Mammary epithelial cell (primary cell): ENCODE measurements at regions of chr1 and their contacts with region 1.

Region 1: GRCh38 chr1:69858534-69858933 is 290.8 kb downstream of the LRRC7 start:
- DNase-seq: no peak
- H3K4me3 ChIP-seq: no peak overlapping the region
- H3K27ac ChIP-seq: no peak overlapping the region
- H3K4me1 ChIP-seq: no peaks in the 10 kb centered on the region
- H3K27me3 ChIP-seq: no peaks in the 10 kb centered on the region
- CTCF ChIP-seq: no peak

Region 2: GRCh38 chr1:69055194-69055593 is 803.3 kb before region 1 on chr1:
- CTCF ChIA-PET with region 1: no interaction called
- dilution Hi-C with region 1: no loop called
- in situ Hi-C with region 1: no loop called
- intact Hi-C with region 1: no loop called
- DNase-seq: peak; percentile 83
- H3K4me3 ChIP-seq: no peak overlapping the region
- H3K27ac ChIP-seq: peak overlapping the region; percentile 45
- H3K4me1 ChIP-seq: peaks cover 17% of the 10 kb centered on the region
- H3K27me3 ChIP-seq: no peaks in the 10 kb centered on the region
- CTCF ChIP-seq: no peak

Region 3: GRCh38 chr1:69898403-69898947 is 39.9 kb after region 1 on chr1:
- CTCF ChIA-PET with region 1: no interaction called
- dilution Hi-C with region 1: no loop called
- in situ Hi-C with region 1: no loop called
- intact Hi-C with region 1: loop called (anchors 2 kb)
- DNase-seq: no peak
- H3K4me3 ChIP-seq: no peak overlapping the region
- H3K27ac ChIP-seq: no peak overlapping the region
- H3K4me1 ChIP-seq: no peaks in the 10 kb centered on the region
- H3K27me3 ChIP-seq: no peaks in the 10 kb centered on the region
- CTCF ChIP-seq: no peak